ENCODE measurements at regions of chr7 and their contacts with region 1.

Region 1: DNA sequence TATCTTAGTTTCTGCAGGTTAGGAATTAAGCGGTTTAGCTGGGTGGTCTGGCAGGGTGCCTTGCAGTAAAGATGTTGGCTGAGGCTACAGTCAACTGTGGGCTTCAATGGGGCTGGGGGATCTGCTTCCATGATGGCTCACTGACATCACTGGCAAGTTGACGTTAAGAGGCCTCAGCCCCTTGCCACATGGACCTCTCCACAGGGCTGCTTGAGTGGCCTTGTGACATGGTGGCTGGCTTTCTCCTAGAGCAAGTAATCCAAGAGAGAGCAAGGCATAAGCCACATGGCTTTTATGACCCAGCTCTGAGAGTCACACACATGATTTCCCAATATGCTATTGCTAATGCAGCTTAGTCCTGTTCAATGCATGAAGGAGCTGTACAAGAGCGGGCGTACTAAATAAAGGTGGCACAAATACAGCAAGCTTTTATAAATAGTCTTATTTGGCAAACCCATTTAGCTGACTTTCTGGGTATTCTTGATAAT is 109.1 kb downstream of the SEPTIN7 start:
- DNase-seq: no peak
- H3K4me3 ChIP-seq: no peak overlapping the region
- H3K27ac ChIP-seq: no peak overlapping the region
- H3K4me1 ChIP-seq: peaks cover 0 to 19% (median 0%) of the 10 kb centered on the region in 3 donors
- H3K27me3 ChIP-seq: no peaks in the 10 kb centered on the region
- CTCF ChIP-seq: no peak
- POLR2A ChIP-seq: no peak

Region 2: DNA sequence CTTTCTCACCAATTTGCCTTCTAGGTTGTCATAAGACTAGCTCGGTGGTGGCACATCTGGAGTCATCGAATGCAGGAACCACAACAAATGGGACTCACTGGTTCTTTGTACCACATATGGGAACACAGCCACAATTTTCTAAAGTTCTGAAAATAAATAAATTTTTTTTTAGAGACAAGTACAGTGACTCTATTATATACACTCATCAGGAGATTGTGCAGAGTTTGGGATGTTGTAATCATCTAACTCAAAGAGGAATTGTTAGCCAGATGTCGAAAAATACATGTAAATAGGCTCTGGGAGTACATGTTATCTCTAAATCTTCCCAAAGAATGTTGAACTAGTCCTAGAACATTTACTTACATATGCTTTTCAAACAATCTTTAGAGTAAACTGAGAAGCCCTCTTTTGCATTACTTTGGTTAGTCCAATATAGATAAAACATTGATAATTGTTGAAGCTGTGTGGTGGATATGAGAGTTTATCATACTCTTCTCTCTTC is 128.7 kb before region 1 on chr7:
- intact Hi-C with region 1: no loop called
- DNase-seq: no peak
- H3K4me3 ChIP-seq: no peak overlapping the region
- H3K27ac ChIP-seq: no peak overlapping the region
- H3K4me1 ChIP-seq: no peaks in the 10 kb centered on the region
- H3K27me3 ChIP-seq: no peaks in the 10 kb centered on the region
- CTCF ChIP-seq: no peak
- POLR2A ChIP-seq: no peak

Region 3: DNA sequence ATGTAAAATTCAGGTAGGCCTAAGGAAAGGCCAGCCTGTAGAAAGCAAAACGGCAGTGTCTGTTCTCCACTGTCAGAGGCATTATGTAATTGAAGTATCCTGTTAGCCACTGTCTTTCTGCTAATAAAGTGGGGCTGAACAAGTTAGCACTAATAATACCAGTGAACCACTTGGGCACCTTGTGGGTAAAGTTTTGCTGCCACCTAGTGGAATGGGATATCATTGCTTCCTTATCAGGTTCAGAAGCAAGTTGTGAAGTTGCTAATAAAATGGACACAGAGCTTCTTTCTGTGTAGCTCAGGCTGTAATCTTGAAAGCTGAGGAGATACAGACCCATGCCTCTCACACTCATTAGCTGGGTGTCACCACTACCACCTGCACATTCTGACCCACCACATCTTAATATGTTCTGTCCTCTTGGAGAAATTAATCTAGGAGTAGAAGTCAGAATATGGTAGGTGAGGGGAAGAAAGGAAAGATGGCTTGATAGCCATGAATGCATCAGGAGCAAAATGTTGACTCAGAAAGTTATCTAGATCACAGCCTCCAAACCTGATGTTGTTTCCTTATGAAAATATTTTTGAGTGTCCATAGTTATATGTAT is 66.0 kb after region 1 on chr7:
- intact Hi-C with region 1: loop called (anchors 10 kb)
- DNase-seq: no peak
- H3K4me3 ChIP-seq: no peak overlapping the region
- H3K27ac ChIP-seq: no peak overlapping the region
- H3K4me1 ChIP-seq: peaks cover 0 to 8% (median 3%) of the 10 kb centered on the region in 3 donors
- H3K27me3 ChIP-seq: peaks cover 0 to 13% (median under 1%) of the 10 kb centered on the region in 4 donors
- CTCF ChIP-seq: peak; percentile 67 to 87 (median 79)
- POLR2A ChIP-seq: no peak

Region 4: DNA sequence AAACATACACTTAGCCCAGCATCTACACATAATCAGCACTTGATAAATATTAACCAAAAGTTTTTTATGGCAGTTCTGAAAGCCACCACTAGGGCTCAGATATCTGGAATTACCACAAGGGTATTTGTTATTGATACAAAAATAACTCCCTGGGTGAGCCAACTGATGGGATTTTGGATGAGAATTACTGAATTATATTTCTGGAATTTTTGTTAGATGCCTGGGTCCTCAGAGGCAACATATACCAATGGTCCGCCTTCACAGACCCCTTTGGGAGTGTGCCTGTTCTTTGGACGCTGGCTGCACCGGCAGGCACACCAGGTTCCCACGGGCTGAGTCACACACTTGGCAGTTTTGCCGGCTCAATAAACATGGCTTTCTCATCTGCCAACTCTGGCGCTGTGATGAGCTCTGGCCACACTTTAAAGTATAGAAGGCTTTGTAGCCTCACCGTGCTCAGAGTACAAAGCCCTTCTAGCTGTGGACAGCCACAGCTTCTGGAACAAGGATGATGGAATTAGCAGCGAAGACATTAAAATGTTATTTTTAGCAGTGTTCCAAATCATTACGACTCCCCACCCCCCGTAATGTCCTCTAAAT is 218.6 kb after region 1 on chr7:
- intact Hi-C with region 1: no loop called
- DNase-seq: no peak
- H3K4me3 ChIP-seq: peak overlapping the region in 2 of 4 donors; percentile 14 to 46
- H3K27ac ChIP-seq: peak overlapping the region; percentile 64 to 85 (median 78)
- H3K4me1 ChIP-seq: peaks cover 23 to 50% (median 26%) of the 10 kb centered on the region in 3 donors
- H3K27me3 ChIP-seq: no peaks in the 10 kb centered on the region
- CTCF ChIP-seq: peak; percentile 65 to 89 (median 82)
- POLR2A ChIP-seq: no peak